Calu3 (cell line): ENCODE measurements at regions of chr3 and their contacts with region 1.

Region 1: DNA sequence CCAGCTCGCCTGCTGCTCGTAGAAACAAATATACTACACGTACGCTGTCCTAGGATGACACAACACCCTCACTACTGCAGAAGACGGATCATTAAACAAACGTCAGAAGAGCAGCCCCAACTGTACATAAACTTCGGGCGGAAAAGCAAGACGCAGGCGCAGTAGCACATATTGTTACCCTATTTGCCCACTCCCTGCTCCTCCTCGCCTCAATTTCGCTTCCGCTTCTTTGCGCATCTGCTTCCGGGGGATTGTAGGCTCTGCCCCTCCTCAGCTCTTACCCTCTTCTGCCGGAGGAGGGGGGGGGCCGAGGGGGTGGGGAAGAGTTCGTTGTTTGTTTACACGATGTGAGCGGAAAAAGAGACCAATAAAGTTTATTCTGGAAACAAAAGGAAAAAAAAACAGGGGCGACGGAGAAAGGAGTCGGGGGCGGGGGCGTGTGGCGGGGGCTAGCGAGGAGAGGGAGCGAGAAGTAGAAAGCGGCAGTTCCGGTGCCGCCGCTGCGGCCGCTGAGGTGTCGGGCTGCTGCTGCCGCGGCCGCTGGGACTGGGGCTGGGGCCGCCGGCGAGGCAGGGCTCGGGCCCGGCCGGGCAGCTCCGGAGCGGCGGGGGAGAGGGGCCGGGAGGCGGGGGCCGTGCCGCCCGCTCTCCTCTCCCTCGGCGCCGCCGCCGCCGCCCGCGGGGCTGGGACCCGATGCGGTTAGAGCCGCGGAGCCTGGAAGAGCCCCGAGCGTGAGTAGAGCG is at the start of gene PIK3CA:
- DNase-seq: peak; percentile 95
- H3K4me3 Mint-ChIP-seq: no peak within 1 kb of the TSS
- H3K27ac Mint-ChIP-seq: no peak within 1 kb of the TSS
- H3K4me1 Mint-ChIP-seq: peaks cover 28% of the 10 kb centered on the region
- H3K27me3 Mint-ChIP-seq: no peaks in the 10 kb centered on the region
- CTCF ChIP-seq: no peak
- total RNA-seq, gene PIK3CA: 26.3 and 28.8 TPM in 2 replicates

Region 2: DNA sequence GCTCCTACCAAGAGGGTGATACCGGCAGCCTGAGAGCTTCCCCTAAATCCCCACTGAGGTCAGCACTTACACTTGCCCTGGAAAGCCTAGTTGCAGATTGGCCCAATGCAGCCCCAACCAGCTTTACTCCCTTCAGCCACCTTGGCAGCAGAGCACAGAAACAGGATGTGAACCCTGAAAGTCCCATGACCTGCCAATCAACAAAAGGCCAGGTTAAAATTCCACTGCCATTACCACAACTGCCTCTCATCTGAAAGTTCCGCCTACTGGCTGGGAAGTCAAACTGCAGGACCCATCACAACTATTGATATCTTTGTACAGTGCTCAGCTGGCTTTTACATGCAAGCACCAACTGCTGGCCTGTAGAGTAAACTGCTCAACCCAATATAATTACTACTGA is 232.7 kb before region 1 on chr3:
- CTCF ChIA-PET with region 1: no interaction called
- intact Hi-C with region 1: no loop called
- DNase-seq: no peak
- H3K4me3 Mint-ChIP-seq: no peak overlapping the region
- H3K27ac Mint-ChIP-seq: no peak overlapping the region
- H3K4me1 Mint-ChIP-seq: no peaks in the 10 kb centered on the region
- H3K27me3 Mint-ChIP-seq: no peaks in the 10 kb centered on the region
- CTCF ChIP-seq: no peak

Region 3: DNA sequence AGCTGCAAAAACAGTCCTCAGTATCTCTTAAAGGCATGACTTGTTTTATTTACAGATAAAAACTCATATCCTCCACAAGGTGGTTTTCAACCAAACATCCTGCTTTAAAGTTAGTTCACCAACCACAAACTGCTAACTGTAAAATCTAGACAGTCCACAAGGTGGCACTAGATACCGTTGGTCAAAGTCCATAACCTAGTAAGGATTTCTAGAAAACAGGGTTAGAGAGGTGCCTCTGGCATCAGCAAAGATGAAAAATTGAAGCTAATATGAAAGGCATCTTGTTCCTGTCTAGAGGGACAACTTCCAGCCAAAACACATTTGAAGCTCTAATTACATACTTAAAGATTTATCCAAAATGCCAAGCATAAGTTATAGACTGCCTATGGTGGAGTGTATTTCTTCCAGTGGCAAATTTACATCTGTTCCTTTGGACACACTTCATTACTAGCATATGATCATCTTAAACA is 132.5 kb before region 1 on chr3:
- CTCF ChIA-PET with region 1: no interaction called
- intact Hi-C with region 1: loop called (anchors 1 kb)
- DNase-seq: peak; percentile 78
- H3K4me3 Mint-ChIP-seq: no peak overlapping the region
- H3K27ac Mint-ChIP-seq: no peak overlapping the region
- H3K4me1 Mint-ChIP-seq: peaks cover 8% of the 10 kb centered on the region
- H3K27me3 Mint-ChIP-seq: no peaks in the 10 kb centered on the region
- CTCF ChIP-seq: peak; percentile 93

Region 4: DNA sequence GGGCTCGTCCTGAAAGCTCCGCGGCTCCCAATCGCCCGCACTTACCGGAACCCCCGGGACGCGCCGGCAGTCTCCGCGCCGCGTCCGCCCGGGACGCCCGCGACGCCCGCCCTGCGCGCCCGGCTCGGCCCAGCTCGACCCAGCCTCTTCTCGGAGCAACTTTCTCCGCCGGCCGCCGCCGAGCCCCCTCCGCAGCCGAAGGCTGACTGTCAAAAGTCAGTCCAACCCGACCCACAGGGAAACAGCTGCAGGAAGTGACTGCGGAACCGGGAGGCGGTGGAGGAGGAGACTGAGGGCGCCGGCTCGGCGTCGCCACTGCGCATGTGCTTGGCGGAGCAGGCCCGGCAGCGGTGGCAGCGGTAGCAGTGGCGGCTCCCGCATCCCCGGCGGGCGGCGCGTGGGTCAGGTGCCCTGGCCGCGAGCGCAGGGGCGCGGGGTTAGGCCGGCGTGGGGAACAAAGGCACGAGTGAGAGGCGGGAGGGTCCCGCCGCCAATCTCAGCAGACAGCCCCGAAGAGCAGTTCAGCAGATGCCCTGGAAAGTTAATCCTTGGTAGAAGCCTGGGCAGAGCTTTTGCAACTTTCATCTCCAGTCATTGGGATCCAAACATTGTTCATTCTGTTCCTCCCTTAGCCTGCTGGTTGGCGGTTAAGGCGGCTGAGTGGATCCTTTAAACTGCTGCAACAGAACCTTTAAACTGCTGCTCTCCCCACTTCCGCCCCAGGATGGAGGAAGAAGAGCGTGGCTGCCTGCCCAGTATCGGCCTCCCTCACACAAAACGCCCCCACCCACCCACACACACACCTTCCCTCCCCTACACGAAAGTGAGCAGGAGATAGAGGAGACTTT is 76.3 kb before region 1 on chr3 and contains the start of gene ZMAT3:
- CTCF ChIA-PET with region 1: interaction called, 4 read pairs
- intact Hi-C with region 1: loop called (anchors 5 kb)
- DNase-seq: peak; percentile 90
- H3K4me3 Mint-ChIP-seq: peak within 1 kb of the TSS; percentile 95
- H3K27ac Mint-ChIP-seq: peak within 1 kb of the TSS; percentile 69
- H3K4me1 Mint-ChIP-seq: peaks cover 26% of the 10 kb centered on the region
- H3K27me3 Mint-ChIP-seq: no peaks in the 10 kb centered on the region
- CTCF ChIP-seq: no peak
- total RNA-seq, gene ZMAT3: 10.5 and 12.1 TPM in 2 replicates

Region 5: DNA sequence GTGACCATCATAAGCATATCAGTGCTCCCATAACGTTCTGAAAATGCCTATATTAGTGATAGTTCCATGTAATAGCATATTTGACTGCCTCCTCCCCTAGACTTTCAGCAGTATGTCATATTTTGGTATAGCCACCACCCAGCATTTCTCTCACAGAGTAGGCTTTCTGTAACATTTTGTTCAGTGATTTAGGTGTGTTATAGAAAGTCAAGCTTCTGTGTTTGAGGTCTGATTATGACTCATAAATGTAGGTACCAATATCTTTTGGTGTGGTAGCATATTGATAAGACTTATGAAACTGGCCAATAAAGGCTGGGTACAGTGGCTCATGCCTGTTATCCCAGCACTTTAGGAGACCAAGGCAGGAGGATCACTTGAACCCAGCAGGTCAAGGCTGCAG is 42.2 kb before region 1 on chr3:
- CTCF ChIA-PET with region 1: no interaction called
- intact Hi-C with region 1: loop called (anchors 1 kb)
- DNase-seq: no peak
- H3K4me3 Mint-ChIP-seq: no peak overlapping the region
- H3K27ac Mint-ChIP-seq: no peak overlapping the region
- H3K4me1 Mint-ChIP-seq: no peaks in the 10 kb centered on the region
- H3K27me3 Mint-ChIP-seq: no peaks in the 10 kb centered on the region
- CTCF ChIP-seq: no peak

Region 6: GRCh38 chr3:179166561-179167201 is 18.6 kb after region 1 on chr3:
- CTCF ChIA-PET with region 1: no interaction called
- intact Hi-C with region 1: no loop called
- DNase-seq: no peak
- H3K4me3 Mint-ChIP-seq: no peak overlapping the region
- H3K27ac Mint-ChIP-seq: no peak overlapping the region
- H3K4me1 Mint-ChIP-seq: no peaks in the 10 kb centered on the region
- H3K27me3 Mint-ChIP-seq: no peaks in the 10 kb centered on the region
- CTCF ChIP-seq: no peak

Region 7: GRCh38 chr3:179196098-179196497 is 48.1 kb after region 1 on chr3:
- CTCF ChIA-PET with region 1: no interaction called
- intact Hi-C with region 1: no loop called
- DNase-seq: no peak
- H3K4me3 Mint-ChIP-seq: no peak overlapping the region
- H3K27ac Mint-ChIP-seq: no peak overlapping the region
- H3K4me1 Mint-ChIP-seq: no peaks in the 10 kb centered on the region
- H3K27me3 Mint-ChIP-seq: no peaks in the 10 kb centered on the region
- CTCF ChIP-seq: no peak

Region 8: GRCh38 chr3:179258820-179259219 is 110.8 kb after region 1 on chr3:
- CTCF ChIA-PET with region 1: no interaction called
- intact Hi-C with region 1: loop called (anchors 5 kb)
- DNase-seq: no peak
- H3K4me3 Mint-ChIP-seq: no peak overlapping the region
- H3K27ac Mint-ChIP-seq: no peak overlapping the region
- H3K4me1 Mint-ChIP-seq: peaks cover 26% of the 10 kb centered on the region
- H3K27me3 Mint-ChIP-seq: no peaks in the 10 kb centered on the region
- CTCF ChIP-seq: no peak